Caco-2 (cell line): ENCODE measurements at regions of chr22 and their contacts with region 1.

Region 1: DNA sequence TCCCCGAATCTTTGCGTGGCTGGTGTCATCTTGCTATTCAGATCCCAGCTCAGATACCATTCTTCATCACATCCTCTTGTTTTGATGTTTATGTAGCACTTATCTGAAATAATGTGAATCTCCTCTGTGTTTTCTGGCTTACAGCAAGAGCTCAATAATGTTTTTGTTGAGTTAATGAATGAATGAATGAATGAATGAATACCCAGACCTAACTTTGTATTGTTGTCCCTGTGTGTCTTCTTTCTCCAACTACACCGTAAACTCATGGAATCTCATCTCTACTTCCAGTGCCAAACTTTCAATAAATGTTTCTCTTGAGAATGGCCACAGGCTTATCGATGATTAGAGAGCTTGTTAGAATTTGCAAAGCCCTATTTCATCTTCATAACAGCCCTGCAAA is 110.2 kb downstream of the MYO18B start:
- DNase-seq: no peak
- H3K4me3 ChIP-seq: no peak overlapping the region
- H3K4me3 Mint-ChIP-seq: no peak overlapping the region
- H3K27ac Mint-ChIP-seq: no peak overlapping the region
- H3K4me1 ChIP-seq: no peaks in the 10 kb centered on the region
- H3K4me1 Mint-ChIP-seq: no peaks in the 10 kb centered on the region
- H3K27me3 ChIP-seq: no peaks in the 10 kb centered on the region
- H3K27me3 Mint-ChIP-seq: peaks cover 5% of the 10 kb centered on the region
- CTCF ChIP-seq: no peak

Region 2: GRCh38 chr22:25666308-25666707 is 185.9 kb before region 1 on chr22:
- CTCF ChIA-PET with region 1: no interaction called
- POLR2A ChIA-PET with region 1: no interaction called
- intact Hi-C with region 1: no loop called
- DNase-seq: peak; percentile 48 to 58
- H3K4me3 ChIP-seq: no peak overlapping the region
- H3K4me3 Mint-ChIP-seq: no peak overlapping the region
- H3K27ac Mint-ChIP-seq: no peak overlapping the region
- H3K4me1 ChIP-seq: peaks cover 14% of the 10 kb centered on the region
- H3K4me1 Mint-ChIP-seq: no peaks in the 10 kb centered on the region
- H3K27me3 ChIP-seq: no peaks in the 10 kb centered on the region
- H3K27me3 Mint-ChIP-seq: no peaks in the 10 kb centered on the region
- CTCF ChIP-seq: no peak

Region 3: GRCh38 chr22:25950111-25950510 is 97.9 kb after region 1 on chr22:
- CTCF ChIA-PET with region 1: interaction called, 13 read pairs
- POLR2A ChIA-PET with region 1: no interaction called
- intact Hi-C with region 1: no loop called
- DNase-seq: no peak
- H3K4me3 ChIP-seq: no peak overlapping the region
- H3K4me3 Mint-ChIP-seq: no peak overlapping the region
- H3K27ac Mint-ChIP-seq: no peak overlapping the region
- H3K4me1 ChIP-seq: no peaks in the 10 kb centered on the region
- H3K4me1 Mint-ChIP-seq: no peaks in the 10 kb centered on the region
- H3K27me3 ChIP-seq: no peaks in the 10 kb centered on the region
- H3K27me3 Mint-ChIP-seq: peaks cover 20% of the 10 kb centered on the region
- CTCF ChIP-seq: no peak